ENCODE measurements at regions of chr20 and their contacts with region 1.

Region 1: GRCh38 chr20:43456809-43457639 is 672 bp upstream of the SRSF6 start:
- DNase-seq: peak; percentile 93
- ATAC-seq: peak; percentile 84
- H3K4me3 Mint-ChIP-seq: peak overlapping the region; percentile 92
- H3K27ac Mint-ChIP-seq: peak overlapping the region; percentile 99
- H3K4me1 Mint-ChIP-seq: peaks cover 37% of the 10 kb centered on the region
- H3K27me3 Mint-ChIP-seq: peaks cover 11% of the 10 kb centered on the region

Region 2: GRCh38 chr20:43432498-43432897 is 24.5 kb before region 1 on chr20:
- CTCF ChIA-PET with region 1: no interaction called
- POLR2A ChIA-PET with region 1: no interaction called
- DNase-seq: no peak
- ATAC-seq: no peak
- H3K4me3 Mint-ChIP-seq: no peak overlapping the region
- H3K27ac Mint-ChIP-seq: no peak overlapping the region
- H3K4me1 Mint-ChIP-seq: no peaks in the 10 kb centered on the region
- H3K27me3 Mint-ChIP-seq: peaks cover 7% of the 10 kb centered on the region

Region 3: DNA sequence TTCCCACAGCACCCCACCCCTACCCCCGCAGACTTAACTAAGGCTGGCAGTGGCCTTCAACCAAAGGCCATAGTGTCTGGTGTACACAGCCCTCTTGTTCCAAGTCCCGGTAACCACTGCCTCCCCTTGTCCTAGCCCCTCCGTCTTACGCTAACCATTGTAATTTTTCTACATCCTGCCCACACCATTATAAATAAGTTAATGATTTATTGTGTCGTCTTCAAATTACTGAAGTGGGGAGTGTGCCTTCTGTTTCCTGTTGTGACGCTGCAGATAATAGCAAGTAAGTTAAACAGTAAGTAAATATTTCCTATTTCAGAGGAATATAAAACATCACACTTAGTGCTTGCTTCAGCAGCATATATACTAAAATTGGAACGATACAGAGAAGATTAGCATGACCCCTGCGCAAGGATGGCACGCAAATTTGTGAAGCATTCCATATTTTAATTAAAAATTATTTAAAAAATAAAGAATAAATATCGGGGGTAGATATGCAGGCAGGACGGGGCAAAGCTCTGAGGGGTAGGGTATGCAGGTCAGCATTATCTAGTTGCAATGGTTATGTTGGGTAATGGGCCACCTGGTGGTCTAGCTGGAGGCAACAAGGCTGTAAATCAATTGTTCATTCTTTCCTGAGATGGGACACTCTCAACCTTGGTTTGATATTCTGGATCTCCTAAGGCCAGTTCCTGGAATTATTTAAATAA is 15.8 kb after region 1 on chr20:
- CTCF ChIA-PET with region 1: interaction called, 3 read pairs
- POLR2A ChIA-PET with region 1: interaction called, 14 read pairs
- DNase-seq: no peak
- ATAC-seq: no peak
- H3K4me3 Mint-ChIP-seq: no peak overlapping the region
- H3K27ac Mint-ChIP-seq: no peak overlapping the region
- H3K4me1 Mint-ChIP-seq: peaks cover 4% of the 10 kb centered on the region
- H3K27me3 Mint-ChIP-seq: peaks cover 8% of the 10 kb centered on the region

Region 4: DNA sequence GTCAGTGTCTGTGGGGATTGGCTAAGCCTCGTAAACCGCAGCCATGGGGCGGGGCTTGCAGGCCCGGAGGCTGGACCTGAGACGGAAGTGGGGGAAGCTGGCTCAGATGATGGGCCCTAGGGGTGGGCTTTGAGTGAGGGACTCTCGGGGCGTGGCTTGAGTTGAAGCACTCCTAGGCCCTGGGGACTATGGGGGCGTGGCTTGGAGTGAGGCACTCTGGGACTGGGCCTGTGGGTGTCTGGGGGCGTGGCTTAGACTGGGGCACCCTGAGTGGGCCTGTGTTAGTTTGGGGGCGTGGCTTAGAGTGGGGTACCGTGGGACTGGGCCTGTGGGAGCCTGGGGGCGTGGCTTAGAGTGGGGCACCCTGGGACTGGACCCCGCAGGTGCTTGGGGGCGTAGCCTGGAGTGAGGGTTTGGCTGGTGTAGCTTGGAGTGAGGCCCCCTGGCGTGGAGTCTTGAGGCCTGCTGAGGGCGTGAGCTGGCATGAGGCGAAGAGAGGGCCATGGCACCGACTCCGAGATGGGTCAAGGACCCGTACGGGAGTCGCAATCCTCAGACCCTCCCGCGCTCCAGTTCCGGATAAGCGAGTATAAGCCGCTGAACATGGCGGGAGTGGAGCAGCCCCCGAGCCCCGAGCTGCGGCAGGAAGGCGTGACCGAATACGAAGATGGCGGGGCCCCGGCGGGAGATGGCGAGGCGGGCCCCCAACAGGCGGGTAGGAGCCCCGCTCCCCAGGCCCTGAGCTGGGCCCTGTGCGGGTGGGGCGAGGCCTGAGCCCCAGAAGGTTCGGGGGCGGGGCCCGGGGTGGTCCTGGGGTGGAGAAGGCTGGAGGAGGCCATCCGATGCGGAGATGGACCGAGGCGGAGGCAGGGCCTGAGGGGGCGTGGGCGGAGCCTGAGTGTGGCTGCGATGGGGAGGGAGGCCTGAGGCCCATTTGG is 57.3 kb after region 1 on chr20:
- CTCF ChIA-PET with region 1: interaction called, 3 read pairs
- POLR2A ChIA-PET with region 1: interaction called, 28 read pairs
- DNase-seq: peak; percentile 96
- ATAC-seq: peak; percentile 94
- H3K4me3 Mint-ChIP-seq: peak overlapping the region; percentile 86
- H3K27ac Mint-ChIP-seq: peak overlapping the region; percentile 90
- H3K4me1 Mint-ChIP-seq: peaks cover 11% of the 10 kb centered on the region
- H3K27me3 Mint-ChIP-seq: peaks cover 2% of the 10 kb centered on the region